Heart left ventricle (tissue), 16 donors: ENCODE measurements at regions of chr2 and their contacts with region 1.

Region 1: DNA sequence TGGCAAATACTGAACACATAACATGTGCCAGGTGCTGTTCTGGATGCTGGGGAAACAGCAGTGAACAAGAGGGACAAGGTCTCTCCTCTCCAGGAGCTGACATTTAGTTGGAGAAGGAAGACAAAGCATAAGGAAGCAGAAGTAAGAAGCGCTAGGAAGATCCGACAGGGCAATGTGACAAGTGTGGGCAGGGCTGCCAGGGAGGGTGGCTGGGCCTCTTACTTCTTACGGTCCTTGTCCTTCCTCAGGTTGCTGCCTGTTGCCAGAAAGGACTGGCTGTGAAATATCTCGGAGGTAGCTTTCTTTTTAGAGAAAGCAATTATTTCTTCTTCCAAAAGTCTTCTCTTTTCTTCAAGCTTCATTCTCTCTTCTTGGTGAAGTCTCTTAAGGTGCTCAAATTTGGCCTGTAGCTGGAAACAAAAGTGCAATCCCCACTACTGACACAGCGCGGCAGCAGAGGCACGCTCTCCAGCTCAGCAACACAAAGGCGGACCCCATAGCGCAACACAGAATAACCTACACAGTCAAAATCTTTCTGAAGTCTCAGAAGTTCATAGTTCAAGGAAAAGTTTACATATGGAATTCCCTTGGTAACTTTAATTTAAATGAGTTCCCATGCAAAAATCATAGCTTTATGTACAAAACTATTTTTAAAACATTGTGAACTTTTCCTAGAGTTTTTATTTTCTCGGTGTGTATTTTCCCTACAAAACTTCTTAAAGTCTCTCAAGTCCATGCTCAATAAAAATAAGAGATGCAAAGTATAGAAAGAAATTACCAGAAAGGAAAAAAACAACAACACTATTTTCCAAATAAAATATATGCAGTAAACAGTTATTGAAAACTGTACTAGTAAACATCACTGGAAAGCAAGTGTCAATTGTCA is 67.7 kb downstream of the SEPTIN10 start:
- DNase-seq: peak in 4 of 5 donors; percentile 38 to 67 (median 50)
- ATAC-seq: peak; percentile 64 to 90 (median 87)
- H3K4me3 ChIP-seq: no peak overlapping the region
- H3K27ac ChIP-seq: no peak overlapping the region
- H3K4me1 ChIP-seq: peaks cover 0 to 3% (median 0%) of the 10 kb centered on the region in 12 donors
- H3K27me3 ChIP-seq: no peaks in the 10 kb centered on the region
- CTCF ChIP-seq: peak; percentile 84 to 97 (median 92)
- POLR2A ChIP-seq: no peak

Region 2: GRCh38 chr2:109597283-109597682 is 51.2 kb after region 1 on chr2:
- intact Hi-C with region 1: loop called in 3 of 10 experiments (anchors 5 to 10 kb)
- DNase-seq: no peak
- ATAC-seq: no peak
- H3K4me3 ChIP-seq: no peak overlapping the region
- H3K27ac ChIP-seq: no peak overlapping the region
- H3K4me1 ChIP-seq: peaks cover 0 to 16% (median 5%) of the 10 kb centered on the region in 12 donors
- H3K27me3 ChIP-seq: no peaks in the 10 kb centered on the region
- CTCF ChIP-seq: no peak
- POLR2A ChIP-seq: no peak

Region 3: GRCh38 chr2:109715313-109715805 is 169.3 kb after region 1 on chr2:
- intact Hi-C with region 1: loop called (anchors 1 to 10 kb)
- DNase-seq: peak in 1 of 5 donors; percentile 40
- ATAC-seq: peak; percentile 74 to 89 (median 86)
- H3K4me3 ChIP-seq: no peak overlapping the region
- H3K27ac ChIP-seq: no peak overlapping the region
- H3K4me1 ChIP-seq: no peaks in the 10 kb centered on the region
- H3K27me3 ChIP-seq: no peaks in the 10 kb centered on the region
- CTCF ChIP-seq: peak; percentile 38 to 71 (median 57)
- POLR2A ChIP-seq: no peak

Region 4: DNA sequence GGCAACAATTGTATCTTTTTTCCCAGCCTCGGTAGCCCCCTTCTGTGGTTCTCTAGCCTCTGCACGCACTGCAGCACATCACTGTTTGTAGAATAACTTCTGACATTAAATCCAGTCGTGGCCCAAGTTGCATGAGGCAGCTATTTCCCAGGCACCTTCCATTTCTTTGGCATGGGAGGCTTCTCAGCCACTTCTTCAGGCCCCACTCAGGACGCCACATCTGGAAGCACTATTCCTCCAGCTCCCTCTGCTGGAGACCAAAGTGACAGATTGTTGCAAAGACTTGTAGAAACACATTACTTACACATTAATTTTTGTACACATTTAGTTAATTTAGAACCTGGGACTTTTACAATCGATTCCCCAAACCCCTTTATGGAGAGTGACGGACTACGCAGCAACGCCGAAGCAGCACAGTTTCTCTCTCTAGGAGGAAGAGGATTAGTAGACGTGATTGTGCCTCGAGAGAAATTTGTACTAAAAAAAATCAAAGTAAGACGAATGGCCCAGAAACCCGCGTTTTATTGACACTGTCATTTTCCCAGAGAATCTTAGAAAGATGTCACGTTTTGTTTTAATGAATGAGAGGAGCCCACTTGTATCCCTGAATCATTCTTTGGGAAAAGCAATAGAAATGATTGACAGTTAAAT is 190.2 kb after region 1 on chr2:
- intact Hi-C with region 1: loop called in 6 of 10 experiments (anchors 1 to 5 kb)
- DNase-seq: peak in 4 of 5 donors; percentile 39 to 54 (median 46)
- ATAC-seq: peak in 3 of 4 donors; percentile 50 to 75 (median 61)
- H3K4me3 ChIP-seq: no peak overlapping the region
- H3K27ac ChIP-seq: no peak overlapping the region
- H3K4me1 ChIP-seq: no peaks in the 10 kb centered on the region
- H3K27me3 ChIP-seq: no peaks in the 10 kb centered on the region
- CTCF ChIP-seq: peak; percentile 39 to 86 (median 74)
- POLR2A ChIP-seq: no peak